RWPE1 (cell line): ENCODE measurements at regions of chr11 and their contacts with region 1.

Region 1: DNA sequence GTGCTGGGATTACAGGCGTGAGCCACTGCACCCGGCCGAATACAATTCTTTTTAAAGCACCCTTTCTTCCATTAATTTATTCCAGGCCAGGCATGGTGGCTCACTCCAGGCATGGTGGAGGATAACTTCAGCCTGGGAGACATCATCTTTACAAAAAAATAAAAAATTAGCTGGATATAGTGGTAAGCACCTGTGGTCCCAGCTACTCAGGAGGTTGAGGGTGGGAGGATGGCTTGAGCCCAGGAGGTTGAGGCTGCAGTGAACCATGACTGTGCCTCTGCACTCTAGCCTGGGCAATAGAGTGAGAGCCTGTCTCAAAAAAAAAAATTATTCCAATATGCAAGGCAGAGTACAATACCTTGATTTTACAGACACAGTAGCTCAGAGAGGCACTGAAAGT is 11.4 kb downstream of the TAGLN start:
- DNase-seq: no peak
- H3K27ac ChIP-seq: no peak overlapping the region
- CTCF ChIP-seq: no peak

Region 2: DNA sequence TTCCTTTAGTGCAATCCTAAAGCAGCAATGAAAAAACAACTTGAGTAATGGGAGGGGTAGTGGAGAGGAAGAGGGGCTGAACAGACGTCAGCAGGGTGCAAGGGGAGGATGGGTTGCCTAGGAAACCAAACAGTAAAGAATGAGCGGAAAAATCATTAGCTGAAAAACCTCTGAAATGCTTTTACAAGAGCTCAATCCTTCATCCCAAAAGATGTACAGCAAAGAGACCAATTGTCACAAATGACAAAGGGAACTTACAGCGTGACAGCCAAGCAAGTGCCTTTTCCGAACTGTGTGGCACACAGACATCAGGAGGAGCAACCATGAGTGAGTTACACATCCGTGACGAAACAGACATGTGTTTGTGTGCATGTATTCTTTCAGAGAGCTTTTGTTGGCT is 217.0 kb before region 1 on chr11:
- CTCF ChIA-PET with region 1: no interaction called
- POLR2A ChIA-PET with region 1: no interaction called
- DNase-seq: no peak
- H3K27ac ChIP-seq: no peak overlapping the region
- CTCF ChIP-seq: no peak

Region 3: DNA sequence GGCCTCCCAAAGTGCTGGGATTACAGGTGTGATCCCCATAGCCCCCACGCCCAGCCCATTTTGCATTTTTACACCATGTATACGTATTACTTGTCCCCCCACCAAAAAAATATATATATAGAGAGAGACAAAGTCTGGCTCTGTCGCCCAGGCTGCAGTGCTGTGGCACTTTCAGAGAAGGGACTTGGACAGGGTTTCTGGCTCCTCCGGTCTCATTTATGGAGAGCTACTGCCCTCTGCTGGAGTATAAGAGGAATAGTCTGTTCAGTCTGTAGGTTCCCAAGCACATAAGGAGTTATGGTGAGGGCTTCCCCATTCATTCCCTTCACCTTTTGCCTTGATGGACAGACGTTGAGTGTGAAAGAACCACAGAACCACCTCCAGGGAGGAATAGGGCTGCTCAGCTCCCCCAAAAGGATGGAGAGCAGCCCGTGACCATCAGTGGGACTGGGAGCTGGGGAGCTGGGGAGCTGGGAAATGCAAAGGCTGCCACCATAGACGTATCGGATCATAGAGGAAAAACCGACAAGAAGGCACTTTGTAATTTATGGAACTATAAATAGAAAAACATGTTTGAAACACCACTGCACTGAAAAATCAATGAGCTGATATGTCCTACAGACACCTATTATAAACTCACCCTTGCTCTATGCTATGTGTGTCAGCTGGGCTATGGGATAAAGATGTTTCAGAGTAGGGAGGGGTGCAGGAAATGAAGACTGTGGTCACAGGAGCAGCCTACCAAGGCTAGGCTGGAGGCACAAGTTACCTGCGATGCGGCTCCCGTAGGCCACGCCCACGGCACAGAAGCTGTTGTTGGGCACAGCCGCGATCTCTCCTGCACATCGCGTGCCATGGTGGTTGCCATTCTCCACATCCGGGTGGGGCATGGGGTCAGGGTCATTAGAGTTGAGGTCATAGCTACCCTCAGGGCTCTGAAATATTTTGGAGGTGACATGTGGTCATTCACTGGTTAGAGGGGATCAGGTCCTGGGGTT is 16.1 kb after region 1 on chr11:
- CTCF ChIA-PET with region 1: interaction called, 12 read pairs
- POLR2A ChIA-PET with region 1: no interaction called
- DNase-seq: peak; percentile 62
- H3K27ac ChIP-seq: no peak overlapping the region
- CTCF ChIP-seq: peak; percentile 81